ENCODE measurements at regions of chr6 and their contacts with region 1.

Region 1: GRCh38 chr6:133916650-133917151 is 27.8 kb downstream of the TCF21 start:
- DNase-seq: peak; percentile 49 to 61 (median 56)
- H3K4me3 ChIP-seq: no peak overlapping the region
- H3K4me3 Mint-ChIP-seq: peak overlapping the region in 2 of 8 donors; percentile 7 to 37
- H3K27ac ChIP-seq: no peak overlapping the region
- H3K27ac Mint-ChIP-seq: no peak overlapping the region
- H3K4me1 ChIP-seq: no peaks in the 10 kb centered on the region
- H3K4me1 Mint-ChIP-seq: peaks cover 0 to 4% (median 2%) of the 10 kb centered on the region in 4 donors
- H3K27me3 ChIP-seq: no peaks in the 10 kb centered on the region
- H3K27me3 Mint-ChIP-seq: peaks cover 4 to 6% of the 10 kb centered on the region in 2 donors

Region 2: DNA sequence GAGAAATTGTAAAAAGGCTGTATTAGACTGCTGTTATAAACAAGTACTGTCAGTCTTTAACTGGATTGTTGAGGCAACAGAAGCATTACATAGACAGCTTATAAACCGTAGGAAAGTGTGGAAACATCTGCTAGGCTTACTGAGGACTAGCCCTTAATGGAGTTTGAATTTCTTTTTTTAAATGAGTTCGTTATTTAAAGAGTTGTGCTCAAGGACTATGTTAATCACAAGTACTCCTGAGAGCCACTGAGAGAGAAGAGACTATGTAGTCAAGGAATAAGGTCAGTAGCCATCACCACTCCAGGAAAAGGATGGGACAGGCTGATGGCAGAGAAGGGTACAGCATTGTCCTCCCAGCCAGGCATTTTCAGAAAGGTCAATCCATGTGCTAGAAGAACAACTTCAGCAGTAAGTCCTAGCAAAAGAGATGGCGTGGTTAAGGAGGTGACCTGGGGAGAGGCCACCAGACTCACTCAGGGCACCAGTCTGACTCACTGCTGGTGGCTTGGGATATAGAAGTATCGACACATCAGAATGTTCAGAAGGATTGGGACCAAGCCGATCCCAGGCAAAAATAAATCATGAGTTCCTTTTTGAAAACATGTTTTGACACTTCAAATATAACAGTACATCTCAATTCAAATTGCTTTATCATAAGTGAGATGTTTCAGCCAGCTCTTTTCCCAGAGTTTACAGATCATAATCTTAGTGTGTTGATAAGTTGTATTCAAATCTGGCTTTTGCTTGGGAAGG is 1095.9 kb before region 1 on chr6:
- CTCF ChIA-PET with region 1: interaction called, 3 read pairs
- POLR2A ChIA-PET with region 1: no interaction called
- intact Hi-C with region 1: loop called (anchors 1 kb)
- DNase-seq: no peak
- H3K4me3 ChIP-seq: no peak overlapping the region
- H3K4me3 Mint-ChIP-seq: no peak overlapping the region
- H3K27ac ChIP-seq: no peak overlapping the region
- H3K27ac Mint-ChIP-seq: peak overlapping the region; percentile 48 to 99 (median 73)
- H3K4me1 ChIP-seq: peaks cover 32% of the 10 kb centered on the region
- H3K4me1 Mint-ChIP-seq: peaks cover 35 to 66% (median 51%) of the 10 kb centered on the region in 4 donors
- H3K27me3 ChIP-seq: no peaks in the 10 kb centered on the region
- H3K27me3 Mint-ChIP-seq: no peaks in the 10 kb centered on the region

Region 3: GRCh38 chr6:133568970-133569889 is 347.5 kb before region 1 on chr6:
- CTCF ChIA-PET with region 1: interaction called, 10 read pairs
- POLR2A ChIA-PET with region 1: no interaction called
- intact Hi-C with region 1: loop called (anchors 1 kb)
- DNase-seq: peak in 1 of 5 donors; percentile 14
- H3K4me3 ChIP-seq: no peak overlapping the region
- H3K4me3 Mint-ChIP-seq: peak overlapping the region in 7 of 8 donors; percentile 47 to 82 (median 70)
- H3K27ac ChIP-seq: no peak overlapping the region
- H3K27ac Mint-ChIP-seq: peak overlapping the region in 1 of 7 donors; percentile 38
- H3K4me1 ChIP-seq: no peaks in the 10 kb centered on the region
- H3K4me1 Mint-ChIP-seq: peaks cover 0 to 5% (median 3%) of the 10 kb centered on the region in 4 donors
- H3K27me3 ChIP-seq: peaks cover 3% of the 10 kb centered on the region
- H3K27me3 Mint-ChIP-seq: peaks cover 10 to 20% of the 10 kb centered on the region in 2 donors

Region 4: DNA sequence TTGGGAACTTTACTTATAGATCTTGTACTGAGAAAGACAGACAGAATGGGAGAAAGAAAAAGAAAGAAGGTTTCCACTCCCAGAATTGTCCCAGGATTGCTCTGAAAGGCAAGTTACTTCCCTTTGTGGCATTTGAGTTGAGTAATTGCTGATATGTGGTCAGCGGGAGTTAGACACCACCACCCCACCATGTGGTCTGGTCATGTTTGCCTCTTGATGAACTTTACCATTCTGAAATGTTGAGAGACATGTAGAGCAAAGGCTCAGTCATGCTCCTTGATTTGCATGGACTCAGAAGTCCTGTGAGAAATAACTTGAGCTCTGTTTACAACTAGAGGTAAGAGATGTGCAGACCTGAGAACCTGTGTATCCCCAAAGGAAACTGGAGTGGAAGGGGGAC is 10.7 kb before region 1 on chr6:
- CTCF ChIA-PET with region 1: interaction called, 51 read pairs
- POLR2A ChIA-PET with region 1: no interaction called
- intact Hi-C with region 1: no loop called
- DNase-seq: no peak
- H3K4me3 ChIP-seq: no peak overlapping the region
- H3K4me3 Mint-ChIP-seq: no peak overlapping the region
- H3K27ac ChIP-seq: no peak overlapping the region
- H3K27ac Mint-ChIP-seq: no peak overlapping the region
- H3K4me1 ChIP-seq: no peaks in the 10 kb centered on the region
- H3K4me1 Mint-ChIP-seq: no peaks in the 10 kb centered on the region
- H3K27me3 ChIP-seq: peaks cover 21% of the 10 kb centered on the region
- H3K27me3 Mint-ChIP-seq: peaks cover 45 to 50% of the 10 kb centered on the region in 2 donors